Head of caudate nucleus (tissue), 42 donors: ENCODE measurements at regions of chr16 and their contacts with region 1.

Region 1: DNA sequence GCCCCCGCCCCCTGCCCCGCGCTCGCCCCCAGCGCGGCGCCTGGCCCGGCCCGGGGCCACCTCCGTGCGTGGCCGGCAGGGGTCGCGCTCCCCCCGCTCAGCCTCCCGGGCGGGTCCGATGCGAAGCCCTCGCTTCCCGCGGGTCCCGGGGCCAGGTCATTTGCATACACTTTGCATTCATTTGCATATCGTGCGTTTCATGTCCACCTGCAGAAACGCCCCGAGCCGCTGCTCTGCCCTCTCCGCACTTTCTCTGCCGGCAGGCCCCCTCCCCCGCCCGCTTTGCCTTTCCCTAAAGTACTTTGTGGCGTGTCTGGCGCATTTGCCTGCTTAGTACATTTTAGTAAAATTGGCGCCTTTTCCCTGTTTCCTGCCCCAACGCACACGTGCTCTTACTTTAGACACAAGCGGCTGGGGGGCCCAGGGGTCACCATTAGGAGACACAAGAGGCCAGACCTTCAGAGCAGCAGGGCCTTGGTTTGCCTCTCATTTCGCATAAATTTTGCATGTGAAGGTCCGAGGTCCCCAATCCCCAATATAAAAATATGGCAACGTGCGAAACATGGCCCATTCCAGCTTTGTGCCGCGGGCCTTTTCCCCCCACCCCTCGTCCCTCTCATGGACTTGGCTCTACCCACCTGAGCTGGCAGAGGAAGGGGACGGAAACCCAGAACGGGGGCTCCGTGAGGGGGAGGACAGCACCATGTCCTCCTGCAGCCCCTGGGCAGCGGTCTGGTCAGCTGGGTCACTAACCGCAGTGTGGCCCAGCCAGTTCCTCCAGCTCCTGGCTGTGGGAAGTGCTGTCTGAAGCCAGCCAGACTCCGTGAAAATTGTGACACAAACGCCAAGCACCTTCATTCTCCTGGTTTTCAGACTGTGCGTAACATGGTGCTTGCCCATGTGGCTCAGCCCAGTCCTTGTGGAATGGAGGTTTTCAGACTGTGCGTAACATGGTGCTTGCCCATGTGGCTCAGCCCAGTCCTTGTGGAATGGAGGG is 34.8 kb downstream of the CBFA2T3 start:
- DNase-seq: peak in 29 of 42 donors; percentile 23 to 76 (median 57)

Region 2: DNA sequence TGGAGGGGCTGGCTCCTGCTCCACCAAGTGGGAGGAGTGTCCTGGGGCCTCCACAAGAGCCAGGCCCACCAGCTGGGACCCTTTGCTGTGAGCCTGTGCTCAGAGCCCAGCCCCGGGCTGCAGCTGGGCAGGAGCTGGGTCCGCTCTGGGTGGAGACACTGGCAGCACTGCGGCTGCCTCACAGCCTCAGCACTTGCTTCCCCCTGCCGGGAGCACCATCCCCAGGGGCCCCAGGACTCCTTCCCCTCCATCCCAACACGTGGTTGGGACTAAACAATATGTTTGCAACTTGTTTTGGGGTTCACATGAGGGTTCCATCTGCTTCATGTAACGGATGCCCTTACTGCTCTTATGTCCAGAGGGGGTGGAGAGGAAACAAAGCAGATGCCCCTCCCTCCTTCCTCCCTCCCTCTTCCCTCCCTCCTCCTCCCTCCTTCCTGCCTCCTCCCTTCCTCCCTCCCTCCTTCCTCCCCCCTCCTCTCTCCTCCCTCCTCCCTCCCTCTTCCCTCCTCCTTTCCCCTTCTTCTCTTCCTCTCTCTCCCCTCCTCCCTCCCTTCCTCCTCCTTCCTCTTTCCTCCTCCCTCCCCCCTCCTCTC is 51.1 kb after region 1 on chr16:
- intact Hi-C with region 1: no loop called
- DNase-seq: no peak

Region 3: DNA sequence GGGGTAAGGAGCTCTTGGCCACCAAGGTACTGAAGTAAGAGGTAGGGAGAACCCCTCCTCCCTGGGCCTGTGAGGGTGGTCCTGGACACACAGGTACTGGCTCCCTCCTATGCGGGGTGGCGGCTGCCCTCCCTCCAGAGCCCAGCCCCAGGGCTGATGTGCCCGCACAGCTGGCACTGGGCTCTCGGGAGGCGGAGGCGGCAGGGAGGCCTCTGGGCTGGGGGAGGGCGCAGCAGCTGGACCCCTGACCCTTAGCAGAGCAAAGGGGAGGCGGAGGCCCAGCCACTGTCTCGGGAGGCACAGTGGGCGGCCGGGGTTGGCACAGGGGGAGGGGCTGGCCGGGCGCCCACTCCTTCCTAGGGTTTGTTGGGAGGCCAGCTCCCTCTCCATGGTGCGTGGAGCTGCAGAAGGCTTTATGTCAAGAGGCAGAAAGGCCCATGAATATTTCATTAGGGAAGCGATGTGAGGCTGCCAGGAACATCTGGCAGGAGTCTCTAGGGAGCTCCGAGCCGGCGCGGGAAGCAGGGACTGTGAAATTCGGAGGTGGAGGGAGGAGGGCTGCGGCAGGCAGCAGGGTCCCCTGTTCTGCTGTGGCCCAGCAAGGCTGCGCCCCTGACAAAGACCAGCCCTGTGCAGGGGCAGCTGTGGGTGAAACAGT is 107.4 kb after region 1 on chr16:
- intact Hi-C with region 1: loop called (anchors 10 kb)
- DNase-seq: peak in 26 of 42 donors; percentile 30 to 81 (median 58)

Region 4: DNA sequence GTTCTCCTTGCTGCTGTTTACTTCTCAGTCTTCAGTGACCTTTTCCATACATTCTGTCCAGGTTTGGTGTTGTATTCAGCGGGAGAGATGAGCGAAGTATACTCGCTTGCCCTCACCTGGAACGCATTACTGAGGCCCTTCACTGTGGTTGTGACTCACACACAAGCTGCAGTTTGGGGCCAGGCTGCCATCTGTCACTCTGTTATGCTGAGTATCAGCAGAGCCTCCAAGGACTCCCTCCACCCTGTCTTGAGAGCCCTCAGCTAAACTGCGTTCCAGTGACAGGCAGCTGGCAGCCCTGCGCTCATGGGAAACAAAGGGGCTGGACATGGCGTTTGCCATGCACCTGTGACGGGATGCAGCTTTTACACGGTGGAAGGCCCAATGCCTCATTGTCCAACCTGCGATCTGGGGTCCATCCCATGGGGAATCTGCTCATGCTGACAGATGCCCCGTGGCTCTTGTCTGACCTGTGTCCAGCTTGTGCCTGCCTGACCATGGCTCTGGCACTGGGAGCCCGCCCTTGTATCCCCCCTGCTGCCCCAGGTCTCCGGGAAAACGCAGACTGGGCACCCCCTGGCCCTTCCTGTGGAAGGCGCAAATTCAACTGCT is 268.8 kb after region 1 on chr16:
- intact Hi-C with region 1: loop called (anchors 5 kb)
- DNase-seq: no peak

Region 5: DNA sequence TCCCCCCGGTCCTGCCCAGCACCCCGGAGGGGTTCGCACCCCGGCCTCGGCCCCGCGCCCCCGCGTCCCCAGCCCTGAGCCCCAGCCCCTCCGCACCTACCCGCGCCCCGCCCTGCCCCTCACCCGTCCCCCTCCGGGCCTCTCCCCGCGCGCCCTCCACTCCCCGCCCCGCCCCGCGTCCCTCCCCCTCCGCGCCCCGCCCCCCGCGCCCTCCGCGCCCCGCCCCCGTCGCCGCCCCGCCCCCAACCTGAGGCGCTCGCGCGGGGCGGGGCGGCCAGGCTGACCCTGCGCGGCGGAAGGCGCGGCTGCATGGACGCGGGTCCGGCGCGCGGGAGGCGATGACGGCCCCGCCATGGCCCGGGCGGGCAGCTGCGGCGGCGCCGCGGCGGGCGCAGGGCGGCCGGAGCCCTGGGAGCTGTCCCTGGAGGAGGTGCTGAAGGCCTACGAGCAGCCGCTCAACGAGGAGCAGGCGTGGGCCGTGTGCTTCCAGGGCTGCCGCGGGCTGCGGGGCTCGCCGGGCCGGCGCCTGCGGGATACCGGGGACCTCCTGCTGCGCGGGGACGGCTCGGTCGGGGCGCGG is 886.1 kb after region 1 on chr16 and contains the start of gene SPIRE2:
- intact Hi-C with region 1: no loop called
- DNase-seq: peak in 40 of 42 donors; percentile 18 to 82 (median 66)